ENCODE measurements at regions of chr1 and their contacts with region 1.

Region 1: GRCh38 chr1:8015036-8015808 is 10.9 kb downstream of the ERRFI1 start:
- DNase-seq: no peak
- H3K4me3 ChIP-seq: no peak overlapping the region
- H3K27ac ChIP-seq: no peak overlapping the region
- H3K4me1 ChIP-seq: peaks cover 4 to 15% (median 10%) of the 10 kb centered on the region in 4 experiments; a peak in 6 of 7 replicates
- H3K27me3 ChIP-seq: no peaks in the 10 kb centered on the region
- CTCF ChIP-seq: peak in 2 of 3 experiments; percentile 62 to 69; a peak in 3 of 4 replicates
- EP300 ChIP-seq: no peak
- POLR2A ChIP-seq: no peak
- RAD21 ChIP-seq: peak; percentile 81 to 83

Region 2: GRCh38 chr1:7983086-7983778 is 32.0 kb before region 1 on chr1:
- CTCF ChIA-PET with region 1: interaction called, 100 read pairs
- POLR2A ChIA-PET with region 1: interaction called, 4 read pairs
- DNase-seq: no peak
- H3K4me3 ChIP-seq: no peak overlapping the region
- H3K27ac ChIP-seq: no peak overlapping the region
- H3K4me1 ChIP-seq: peaks cover 0 to 3% (median 1%) of the 10 kb centered on the region in 4 experiments; a peak in 1 of 7 replicates
- H3K27me3 ChIP-seq: no peaks in the 10 kb centered on the region
- CTCF ChIP-seq: no peak
- EP300 ChIP-seq: no peak
- POLR2A ChIP-seq: no peak
- RAD21 ChIP-seq: no peak

Region 3: DNA sequence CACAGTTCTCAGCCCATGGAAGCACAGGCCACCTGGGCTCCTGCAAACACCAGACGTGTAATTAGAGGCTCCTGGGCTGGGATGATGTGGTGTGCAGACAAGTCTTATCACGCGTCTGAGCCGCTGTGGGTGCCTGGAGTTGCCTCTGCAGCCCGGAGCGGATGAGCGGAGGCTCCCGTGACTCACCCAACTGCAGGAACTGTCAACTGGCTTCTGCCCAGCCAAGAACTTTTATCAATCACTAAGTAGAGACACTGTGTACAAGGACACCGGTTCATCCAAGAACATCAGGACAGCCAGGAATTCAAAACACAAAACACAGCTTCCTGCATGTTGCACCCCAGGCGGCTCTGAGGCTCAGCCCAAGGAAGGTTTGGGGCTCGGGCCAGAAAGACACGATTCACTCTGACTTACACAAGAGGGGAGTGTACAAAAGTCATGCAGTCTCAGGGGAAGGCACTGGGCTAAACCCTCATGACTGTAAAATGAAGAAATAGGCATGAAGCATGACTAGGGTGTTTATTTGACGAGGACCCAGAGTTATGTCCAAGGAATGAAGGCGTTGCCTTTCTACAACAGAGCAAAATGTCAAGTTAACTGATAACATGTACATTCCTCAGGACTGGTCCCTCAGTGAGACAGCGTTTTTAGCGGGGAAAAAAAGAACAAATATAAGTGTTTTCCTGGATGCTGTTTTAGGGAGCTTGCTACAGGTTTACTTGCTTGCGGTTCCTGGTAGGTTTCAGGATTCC is 10.2 kb before region 1 on chr1:
- CTCF ChIA-PET with region 1: interaction called, 23 read pairs
- POLR2A ChIA-PET with region 1: no interaction called
- DNase-seq: no peak
- H3K4me3 ChIP-seq: no peak overlapping the region
- H3K27ac ChIP-seq: no peak overlapping the region
- H3K4me1 ChIP-seq: peaks cover 4 to 19% (median 12%) of the 10 kb centered on the region in 4 experiments
- H3K27me3 ChIP-seq: no peaks in the 10 kb centered on the region
- CTCF ChIP-seq: no peak
- EP300 ChIP-seq: no peak
- POLR2A ChIP-seq: no peak
- RAD21 ChIP-seq: no peak

Region 4: GRCh38 chr1:8165595-8166360 is 150.6 kb after region 1 on chr1:
- CTCF ChIA-PET with region 1: interaction called, 11 read pairs
- POLR2A ChIA-PET with region 1: no interaction called
- DNase-seq: no peak
- H3K4me3 ChIP-seq: no peak overlapping the region; a peak in 1 of 8 replicates
- H3K27ac ChIP-seq: peak overlapping the region; percentile 75; the same call in 1 of the 2 replicates
- H3K4me1 ChIP-seq: peaks cover 12 to 18% (median 15%) of the 10 kb centered on the region in 4 experiments
- H3K27me3 ChIP-seq: no peaks in the 10 kb centered on the region
- CTCF ChIP-seq: peak; percentile 44 to 55 (median 46)
- EP300 ChIP-seq: no peak
- POLR2A ChIP-seq: no peak
- RAD21 ChIP-seq: peak; percentile 35 to 54; a peak in 3 of 4 replicates